Common myeloid progenitor, CD34-positive (primary cell): ENCODE measurements at regions of chr2 and their contacts with region 1.

Region 1: DNA sequence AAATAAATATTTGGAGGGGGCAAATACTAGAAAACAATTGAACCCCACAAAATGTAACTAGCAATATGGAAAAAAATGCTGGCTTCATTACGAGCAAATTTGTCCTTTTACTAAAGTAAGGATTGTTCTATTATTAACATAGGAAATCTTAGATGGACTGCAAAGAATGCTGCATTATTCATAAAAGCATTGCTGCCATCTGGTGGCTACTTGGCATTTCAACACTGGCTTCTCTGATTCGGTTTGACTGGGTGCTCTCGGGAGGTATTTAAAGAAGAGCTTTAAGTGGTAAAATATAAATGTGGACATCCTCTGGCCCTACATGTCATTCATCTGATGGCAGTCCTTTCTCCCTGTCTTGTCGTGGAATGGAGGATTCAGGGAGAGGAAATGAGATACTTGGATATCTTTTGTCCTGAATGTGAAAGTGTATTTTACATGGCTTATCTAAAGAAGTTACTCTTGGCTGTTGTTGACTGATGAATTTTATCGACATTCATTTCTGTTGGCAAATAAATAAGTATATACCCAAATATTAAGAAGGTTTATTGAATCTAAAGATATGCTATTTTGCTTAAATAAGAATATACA is 130.2 kb downstream of the ARHGAP15 start:
- DNase-seq: peak; percentile 84 to 88 (median 87)
- H3K4me3 ChIP-seq: peak overlapping the region in 2 of 7 experiments; percentile 50 to 60
- H3K27ac ChIP-seq: peak overlapping the region in 1 of 2 experiments; percentile 62
- H3K4me1 ChIP-seq: peaks cover 35 to 77% (median 43%) of the 10 kb centered on the region in 4 experiments
- H3K27me3 ChIP-seq: no peaks in the 10 kb centered on the region

Region 2: DNA sequence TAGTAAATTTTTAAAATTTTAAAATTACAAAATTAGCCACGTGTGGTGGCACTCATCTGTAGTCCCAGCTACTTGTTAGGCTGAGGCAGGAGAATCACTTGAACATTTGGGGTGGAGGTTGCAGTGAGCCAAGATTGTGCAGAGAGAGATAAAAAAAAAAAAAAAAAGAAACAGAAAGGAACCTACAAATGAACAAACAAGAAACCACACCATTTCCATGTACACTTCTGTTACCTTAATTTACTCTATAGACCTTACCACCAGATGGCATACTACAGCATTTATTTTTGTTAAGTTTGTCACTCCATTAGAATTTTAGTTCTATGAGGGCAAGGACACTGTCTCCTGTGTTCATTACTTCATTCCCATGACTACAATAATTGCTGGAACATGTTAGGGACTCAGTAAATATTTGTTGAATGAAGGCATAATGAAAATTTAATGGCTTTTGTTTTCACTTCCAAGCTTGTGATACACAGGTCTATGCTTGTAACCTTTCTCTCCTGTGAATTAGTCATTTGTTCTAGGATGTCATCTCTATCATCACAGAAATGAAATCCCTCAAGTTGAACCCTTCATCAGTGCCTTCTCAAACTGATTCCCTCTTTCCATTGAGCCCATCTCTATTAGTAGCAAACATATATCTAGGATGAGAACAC is 54.2 kb before region 1 on chr2:
- CTCF ChIA-PET with region 1: interaction called, 18 read pairs
- POLR2A ChIA-PET with region 1: no interaction called
- DNase-seq: peak; percentile 42 to 69 (median 64)
- H3K4me3 ChIP-seq: no peak overlapping the region
- H3K27ac ChIP-seq: no peak overlapping the region
- H3K4me1 ChIP-seq: peaks cover 0 to 11% (median 0%) of the 10 kb centered on the region in 4 experiments
- H3K27me3 ChIP-seq: no peaks in the 10 kb centered on the region

Region 3: GRCh38 chr2:143217512-143218115 is 41.8 kb before region 1 on chr2:
- CTCF ChIA-PET with region 1: interaction called, 10 read pairs
- POLR2A ChIA-PET with region 1: no interaction called
- DNase-seq: peak in 2 of 3 donors; percentile 48 to 54
- H3K4me3 ChIP-seq: no peak overlapping the region
- H3K27ac ChIP-seq: no peak overlapping the region
- H3K4me1 ChIP-seq: peaks cover 0 to 13% (median 7%) of the 10 kb centered on the region in 4 experiments
- H3K27me3 ChIP-seq: no peaks in the 10 kb centered on the region

Region 4: GRCh38 chr2:143225931-143226330 is 33.5 kb before region 1 on chr2:
- CTCF ChIA-PET with region 1: interaction called, 20 read pairs
- POLR2A ChIA-PET with region 1: no interaction called
- DNase-seq: no peak
- H3K4me3 ChIP-seq: no peak overlapping the region
- H3K27ac ChIP-seq: no peak overlapping the region
- H3K4me1 ChIP-seq: no peaks in the 10 kb centered on the region
- H3K27me3 ChIP-seq: no peaks in the 10 kb centered on the region

Region 5: GRCh38 chr2:143246815-143247744 is 12.4 kb before region 1 on chr2:
- CTCF ChIA-PET with region 1: interaction called, 26 read pairs
- POLR2A ChIA-PET with region 1: interaction called, 5 read pairs
- DNase-seq: peak in 2 of 3 donors; percentile 51 to 65
- H3K4me3 ChIP-seq: peak overlapping the region in 2 of 7 experiments; percentile 11 to 56
- H3K27ac ChIP-seq: no peak overlapping the region
- H3K4me1 ChIP-seq: peaks cover 8 to 32% (median 20%) of the 10 kb centered on the region in 4 experiments
- H3K27me3 ChIP-seq: no peaks in the 10 kb centered on the region

Region 6: DNA sequence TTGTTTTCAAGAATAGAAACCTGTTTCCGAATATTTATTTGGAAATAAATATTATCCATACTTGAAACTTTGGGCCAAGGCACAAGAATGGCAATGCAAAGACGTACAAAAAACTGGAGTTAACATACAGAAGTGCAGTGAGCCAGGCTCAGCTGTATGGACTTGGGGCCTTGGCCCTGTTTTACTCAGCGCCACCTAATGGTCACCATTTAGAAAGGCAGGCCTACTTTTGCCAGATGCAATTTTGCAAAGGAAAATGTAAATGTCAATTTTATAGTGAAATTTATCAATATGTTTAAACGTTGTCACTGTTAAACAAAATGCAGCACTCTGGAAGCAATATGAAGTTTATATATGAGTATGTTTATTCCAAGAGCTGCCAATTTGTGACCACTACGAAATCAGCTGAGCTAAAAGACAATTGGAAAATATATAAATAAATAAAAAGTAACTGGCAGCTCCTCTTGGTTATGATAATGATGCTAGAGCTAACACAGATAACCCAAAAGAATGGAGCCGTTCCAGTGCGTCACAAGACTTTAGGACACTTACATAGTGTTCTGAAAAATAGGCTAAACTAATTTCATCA is 24.7 kb after region 1 on chr2:
- CTCF ChIA-PET with region 1: interaction called, 29 read pairs
- POLR2A ChIA-PET with region 1: no interaction called
- DNase-seq: peak; percentile 67 to 80 (median 75)
- H3K4me3 ChIP-seq: no peak overlapping the region
- H3K27ac ChIP-seq: no peak overlapping the region
- H3K4me1 ChIP-seq: no peaks in the 10 kb centered on the region
- H3K27me3 ChIP-seq: no peaks in the 10 kb centered on the region

Region 7: DNA sequence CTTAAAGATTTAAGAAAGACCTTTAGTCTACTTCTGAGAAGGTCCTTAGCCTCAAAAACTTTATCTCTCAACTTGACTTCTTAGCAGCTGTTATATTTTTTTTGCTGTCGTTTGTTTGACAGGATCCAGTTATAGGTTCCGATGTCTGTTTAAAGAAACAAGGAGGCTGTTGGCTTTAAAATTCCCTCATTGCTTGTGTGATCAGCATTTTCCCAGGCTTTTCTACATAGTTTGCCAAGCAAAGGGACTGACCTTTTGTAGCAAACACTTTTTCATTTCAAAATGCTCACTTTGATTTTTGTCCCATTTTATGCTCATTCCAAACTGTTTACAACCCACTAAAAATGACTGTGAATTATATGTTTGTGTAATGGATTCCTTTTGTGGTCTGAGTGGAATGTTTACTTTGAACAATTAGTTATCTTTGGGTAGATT is 264.7 kb after region 1 on chr2:
- CTCF ChIA-PET with region 1: no interaction called
- POLR2A ChIA-PET with region 1: no interaction called
- DNase-seq: no peak
- H3K4me3 ChIP-seq: no peak overlapping the region
- H3K27ac ChIP-seq: peak overlapping the region in 1 of 2 experiments; percentile 9
- H3K4me1 ChIP-seq: peaks cover 0 to 14% (median 2%) of the 10 kb centered on the region in 4 experiments
- H3K27me3 ChIP-seq: no peaks in the 10 kb centered on the region